Right ventricle myocardium inferior (tissue), 1 donor: ENCODE measurements at regions of chr2 and their contacts with region 1.

Region 1: DNA sequence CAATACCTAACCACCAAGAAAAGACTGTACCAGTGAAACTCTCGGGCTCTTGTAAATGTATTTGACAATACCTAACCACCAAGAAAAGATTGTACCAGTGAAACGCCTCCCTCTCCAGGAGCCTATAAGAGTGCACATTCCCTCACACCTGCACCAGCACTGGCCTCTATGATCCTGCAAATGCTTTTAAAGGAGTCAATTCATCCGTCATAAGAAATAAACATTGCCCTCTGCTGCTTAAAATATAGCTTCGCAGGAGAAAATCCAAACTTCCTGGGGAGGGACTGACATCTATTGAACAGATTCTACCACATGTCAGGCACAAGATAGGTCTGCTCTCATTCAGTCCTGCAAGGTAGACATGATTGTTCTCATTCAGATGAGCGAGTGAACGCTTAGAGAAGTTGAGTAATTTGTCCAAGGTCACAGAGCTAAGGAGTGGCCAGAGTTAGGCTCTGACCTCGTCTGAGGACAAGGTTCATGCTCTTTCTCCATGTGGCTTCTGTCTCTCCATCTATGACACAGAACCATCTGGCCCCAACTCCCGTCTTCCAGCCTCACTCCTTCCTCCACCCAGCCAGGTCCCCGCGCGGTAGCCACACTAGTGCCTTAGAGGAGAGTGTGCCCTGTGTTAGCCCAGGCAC is 38.7 kb downstream of the MCFD2 start:
- DNase-seq: no peak
- ATAC-seq: peak; percentile 60

Region 2: GRCh38 chr2:46801731-46802664 is 74.9 kb before region 1 on chr2:
- intact Hi-C with region 1: loop called (anchors 1 kb)
- DNase-seq: no peak
- ATAC-seq: peak; percentile 9

Region 3: GRCh38 chr2:46812361-46813024 is 64.4 kb before region 1 on chr2:
- intact Hi-C with region 1: loop called (anchors 2 kb)
- DNase-seq: peak; percentile 79
- ATAC-seq: peak; percentile 39

Region 4: GRCh38 chr2:46836295-46837111 is 40.4 kb before region 1 on chr2:
- intact Hi-C with region 1: no loop called
- DNase-seq: no peak
- ATAC-seq: peak; percentile 11

Region 5: DNA sequence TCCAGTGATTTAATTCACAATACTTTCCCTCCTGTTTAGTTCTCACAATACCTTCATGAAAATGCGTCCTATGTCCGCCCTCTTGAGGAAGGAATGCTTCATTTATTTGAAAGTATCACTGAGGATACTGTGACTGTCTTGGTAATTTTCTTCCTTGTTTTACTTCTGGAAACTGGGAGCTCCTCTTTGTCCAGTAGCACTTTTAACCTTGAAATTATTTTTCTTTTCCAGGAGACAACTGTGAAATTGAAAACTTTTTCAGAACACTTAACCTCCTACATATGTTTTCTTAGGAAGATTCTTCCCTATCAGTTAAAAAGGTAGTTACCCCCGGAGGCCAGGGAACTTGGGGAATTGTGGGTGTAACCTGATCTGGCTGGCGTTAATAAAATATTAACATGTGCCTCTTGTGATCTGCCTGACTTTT is 1594.2 kb after region 1 on chr2:
- intact Hi-C with region 1: no loop called
- DNase-seq: no peak
- ATAC-seq: peak; percentile 52